ENCODE measurements at regions of chr6 and their contacts with region 1.

Region 1: GRCh38 chr6:30672445-30673253 is at the start of gene DHX16:
- DNase-seq: peak; percentile 90
- H3K4me3 ChIP-seq: peak within 1 kb of the TSS; percentile 97
- CTCF ChIP-seq: peak; percentile 61

Region 2: GRCh38 chr6:30600451-30600961 is 72.1 kb before region 1 on chr6:
- CTCF ChIA-PET with region 1: no interaction called
- POLR2A ChIA-PET with region 1: no interaction called
- DNase-seq: no peak
- H3K4me3 ChIP-seq: no peak overlapping the region
- CTCF ChIP-seq: no peak

Region 3: DNA sequence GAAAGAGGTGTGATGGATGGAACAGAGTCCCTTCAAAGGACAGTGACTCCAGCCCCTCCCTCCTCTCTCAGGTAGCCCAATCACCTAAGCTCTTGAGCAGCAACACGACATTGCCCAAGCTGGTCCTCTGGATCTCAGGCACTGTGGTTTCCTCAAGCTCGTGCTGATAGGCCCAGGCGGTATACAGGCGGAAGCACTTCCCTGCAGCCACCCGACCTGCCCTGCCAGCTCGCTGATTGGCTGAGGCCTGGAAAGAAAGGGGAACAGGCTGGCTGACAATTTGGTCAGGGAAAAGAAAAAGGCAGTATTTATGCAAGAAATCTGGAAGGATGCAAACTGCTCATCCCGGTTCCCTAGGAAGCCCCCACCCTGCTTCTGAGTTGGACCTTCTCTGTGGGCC is 16.1 kb before region 1 on chr6:
- CTCF ChIA-PET with region 1: interaction called, 23 read pairs
- POLR2A ChIA-PET with region 1: no interaction called
- DNase-seq: no peak
- H3K4me3 ChIP-seq: no peak overlapping the region
- CTCF ChIP-seq: no peak

Region 4: GRCh38 chr6:30686908-30687658 is 14.4 kb after region 1 on chr6:
- CTCF ChIA-PET with region 1: interaction called, 31 read pairs
- POLR2A ChIA-PET with region 1: interaction called, 6 read pairs
- DNase-seq: peak; percentile 69
- H3K4me3 ChIP-seq: peak overlapping the region; percentile 89
- CTCF ChIP-seq: no peak